Caco-2 (cell line): ENCODE measurements at regions of chr15 and their contacts with region 1.

Region 1: DNA sequence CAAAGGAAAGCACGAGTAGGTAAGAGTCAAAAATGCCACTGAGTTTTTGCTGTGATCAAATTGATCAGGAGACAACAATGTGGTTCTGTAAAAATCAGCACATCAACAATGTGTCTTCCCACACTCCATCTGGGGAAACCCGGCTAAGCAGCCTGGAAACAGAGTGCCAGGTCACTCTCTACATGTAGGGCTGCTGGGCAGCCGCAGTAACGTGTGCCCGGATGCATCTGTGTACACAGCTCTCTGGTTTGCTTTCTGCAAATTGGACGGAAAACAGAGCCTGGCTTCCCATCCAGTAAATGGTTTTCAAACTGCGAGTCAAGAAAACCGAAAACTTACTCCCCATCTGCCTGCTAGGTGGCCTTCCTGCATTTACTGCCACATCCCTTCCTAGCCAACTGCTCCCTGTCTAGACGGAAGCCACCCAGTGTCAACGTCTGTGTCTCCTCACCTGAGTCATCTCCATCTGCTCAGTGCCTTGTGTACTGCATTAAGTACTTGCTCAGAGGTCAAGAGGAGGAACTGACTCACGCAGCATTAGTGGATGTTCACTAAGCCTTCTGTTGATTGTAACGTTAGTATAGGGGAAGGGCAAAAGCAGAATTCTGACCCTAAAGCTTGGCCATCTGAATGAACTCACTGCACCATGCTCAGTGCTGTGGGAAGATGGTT is 124.1 kb downstream of the TJP1 start:
- DNase-seq: peak; percentile 54 to 62
- H3K4me3 ChIP-seq: no peak overlapping the region
- H3K4me3 Mint-ChIP-seq: peak overlapping the region; percentile 25
- H3K27ac Mint-ChIP-seq: peak overlapping the region; percentile 62
- H3K4me1 ChIP-seq: peaks cover 6% of the 10 kb centered on the region
- H3K4me1 Mint-ChIP-seq: peaks cover 22% of the 10 kb centered on the region
- H3K27me3 ChIP-seq: no peaks in the 10 kb centered on the region
- H3K27me3 Mint-ChIP-seq: no peaks in the 10 kb centered on the region
- CTCF ChIP-seq: no peak

Region 2: DNA sequence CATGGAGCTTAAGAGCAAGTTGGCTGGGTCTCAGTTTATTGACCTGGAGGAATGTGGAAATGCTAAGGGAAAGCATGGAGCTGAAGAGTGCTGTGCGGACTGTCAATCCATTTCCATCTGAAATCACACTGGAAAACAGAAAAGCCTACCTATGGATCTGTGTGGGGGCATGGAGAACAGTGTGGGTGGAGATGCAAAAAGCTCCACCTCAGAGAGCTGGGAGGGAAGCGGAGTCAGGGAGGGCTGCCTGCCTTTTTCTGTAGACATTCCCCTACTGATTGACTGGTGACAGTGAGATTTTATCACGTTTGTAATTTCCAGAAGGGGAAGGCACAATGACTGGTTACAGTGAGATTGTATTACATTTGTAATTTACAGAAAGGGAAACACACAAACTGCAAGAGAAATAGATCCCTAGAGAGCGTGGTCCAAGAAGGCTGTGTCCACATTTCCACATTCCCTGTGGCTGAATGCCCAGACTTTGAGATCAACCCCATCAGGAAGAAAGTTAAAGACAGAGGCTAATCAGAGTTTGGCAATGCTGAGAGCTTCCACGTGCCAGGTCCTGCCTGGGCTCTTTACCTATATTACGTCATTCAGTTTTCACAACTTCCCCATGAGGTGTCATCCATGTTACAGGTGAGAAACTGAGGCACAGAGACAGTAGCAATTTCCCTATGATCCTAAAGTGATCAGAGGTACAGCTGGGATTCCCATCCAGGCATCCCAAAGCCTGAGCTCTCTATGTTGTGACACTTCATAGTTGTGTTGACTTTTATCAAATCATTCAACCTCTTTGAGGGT is 360.8 kb before region 1 on chr15:
- CTCF ChIA-PET with region 1: no interaction called
- POLR2A ChIA-PET with region 1: no interaction called
- intact Hi-C with region 1: no loop called
- DNase-seq: no peak
- H3K4me3 ChIP-seq: no peak overlapping the region
- H3K4me3 Mint-ChIP-seq: no peak overlapping the region
- H3K27ac Mint-ChIP-seq: no peak overlapping the region
- H3K4me1 ChIP-seq: no peaks in the 10 kb centered on the region
- H3K4me1 Mint-ChIP-seq: no peaks in the 10 kb centered on the region
- H3K27me3 ChIP-seq: no peaks in the 10 kb centered on the region
- H3K27me3 Mint-ChIP-seq: peaks cover 14% of the 10 kb centered on the region
- CTCF ChIP-seq: no peak

Region 3: DNA sequence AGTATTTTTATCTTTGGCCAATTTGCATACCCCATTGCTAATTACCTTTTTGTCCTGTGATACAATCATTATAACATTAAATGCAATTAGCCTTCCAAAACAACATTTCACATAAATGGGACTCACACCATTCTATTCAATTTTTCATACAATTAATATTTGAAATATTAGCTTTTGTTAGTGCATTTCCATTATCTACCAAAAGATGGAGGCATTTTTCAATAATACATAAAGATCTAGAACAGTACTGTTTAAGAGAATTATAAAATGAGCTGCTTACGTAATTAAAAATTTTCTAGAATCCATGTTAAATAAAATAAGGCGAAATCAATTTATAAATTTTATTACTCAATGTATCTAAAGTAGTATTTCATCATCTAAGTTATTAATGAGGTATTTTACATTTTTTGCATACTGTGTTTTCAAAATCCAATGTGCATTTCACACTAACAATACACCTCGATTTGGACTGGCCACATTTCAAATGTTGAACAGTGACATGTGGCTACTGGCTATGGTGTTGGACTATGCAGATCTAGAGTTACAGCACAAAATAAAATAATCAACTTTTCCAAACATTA is 49.8 kb after region 1 on chr15:
- CTCF ChIA-PET with region 1: no interaction called
- POLR2A ChIA-PET with region 1: no interaction called
- intact Hi-C with region 1: loop called (anchors 10 kb)
- DNase-seq: no peak
- H3K4me3 ChIP-seq: no peak overlapping the region
- H3K4me3 Mint-ChIP-seq: no peak overlapping the region
- H3K27ac Mint-ChIP-seq: no peak overlapping the region
- H3K4me1 ChIP-seq: 0 out of 2 replicates have a peak, but pooled peaks cover 7% of the 10 kb centered on the region
- H3K4me1 Mint-ChIP-seq: peaks cover 15% of the 10 kb centered on the region
- H3K27me3 ChIP-seq: no peaks in the 10 kb centered on the region
- H3K27me3 Mint-ChIP-seq: no peaks in the 10 kb centered on the region
- CTCF ChIP-seq: peak; percentile 17 to 18